ENCODE measurements at regions of chr15 and their contacts with region 1.

Region 1: DNA sequence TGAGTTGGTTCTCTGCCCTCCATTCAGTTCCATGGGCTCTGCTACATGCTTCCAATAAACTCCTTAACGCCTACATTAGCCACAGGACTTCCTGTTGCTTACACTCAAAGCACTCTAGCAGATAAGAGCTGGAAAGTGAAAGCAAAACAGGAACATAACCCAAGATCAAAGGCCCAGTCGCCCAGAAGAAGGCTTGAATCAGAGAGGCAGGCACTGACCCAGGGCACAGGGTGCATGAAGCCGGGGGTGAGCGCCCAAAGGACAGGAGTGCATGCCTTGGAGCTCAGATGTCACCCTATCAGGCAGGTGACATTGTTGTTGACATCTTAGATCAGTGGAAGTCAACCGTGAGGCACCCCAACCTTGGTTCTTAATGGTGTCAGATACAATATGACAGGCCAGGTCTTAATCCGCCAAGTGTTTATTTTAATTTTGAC is 235.1 kb downstream of the UACA start:
- DNase-seq: peak; percentile 77
- ATAC-seq: peak; percentile 61
- H3K4me3 ChIP-seq: peak overlapping the region in 2 of 5 experiments; percentile 10 to 51
- H3K4me3 Mint-ChIP-seq: peak overlapping the region; percentile 70
- H3K27ac ChIP-seq: peak overlapping the region; percentile 54 to 78
- H3K27ac Mint-ChIP-seq: peak overlapping the region; percentile 88
- H3K4me1 ChIP-seq: peaks cover 36 to 42% of the 10 kb centered on the region in 2 donors
- H3K4me1 Mint-ChIP-seq: peaks cover 49% of the 10 kb centered on the region
- H3K27me3 ChIP-seq: peaks cover 0 to under 1% (median 0%) of the 10 kb centered on the region in 4 experiments
- H3K27me3 Mint-ChIP-seq: peaks cover 7% of the 10 kb centered on the region
- CTCF ChIP-seq: no peak

Region 2: DNA sequence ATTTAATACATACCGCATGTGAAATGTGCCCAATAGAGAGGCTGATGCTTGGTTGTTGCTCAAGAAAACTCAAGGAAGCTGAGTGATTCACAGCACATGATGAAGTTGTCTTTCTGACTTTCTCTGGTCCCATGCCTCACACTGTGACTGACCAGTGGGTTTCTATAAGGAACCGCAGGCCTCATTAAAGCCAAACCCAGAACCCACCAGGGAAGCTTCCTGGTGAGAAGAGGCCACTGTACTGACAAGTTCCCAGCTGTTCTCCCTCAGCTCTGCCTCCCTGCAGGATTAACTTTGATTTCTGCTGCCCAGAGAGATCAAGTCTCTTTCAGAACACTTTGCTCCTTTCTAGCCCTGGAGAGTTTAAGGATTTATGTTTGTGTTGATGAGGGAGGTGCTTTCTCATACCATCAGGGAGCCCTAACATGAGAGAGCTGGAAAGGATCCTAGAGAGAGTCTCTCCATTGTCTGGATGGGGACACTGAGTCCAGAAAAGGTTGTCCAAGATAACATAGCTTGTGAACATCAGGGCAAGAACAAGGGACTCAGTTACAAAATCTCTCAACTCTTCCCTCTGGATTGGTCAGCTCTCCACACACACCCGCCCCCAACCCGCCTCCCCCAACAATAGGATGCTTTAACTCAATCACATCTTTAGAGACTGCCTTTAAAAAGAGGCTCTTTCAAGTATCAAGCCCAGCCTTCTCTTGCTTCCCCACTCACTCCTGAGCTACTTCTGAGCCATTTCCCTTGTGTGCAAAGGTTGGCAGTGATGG is 127.3 kb before region 1 on chr15:
- CTCF ChIA-PET with region 1: no interaction called
- POLR2A ChIA-PET with region 1: no interaction called
- intact Hi-C with region 1: no loop called
- DNase-seq: no peak
- ATAC-seq: no peak
- H3K4me3 ChIP-seq: no peak overlapping the region
- H3K4me3 Mint-ChIP-seq: no peak overlapping the region
- H3K27ac ChIP-seq: no peak overlapping the region
- H3K27ac Mint-ChIP-seq: no peak overlapping the region
- H3K4me1 ChIP-seq: peaks cover 13 to 15% of the 10 kb centered on the region in 2 donors
- H3K4me1 Mint-ChIP-seq: peaks cover 17% of the 10 kb centered on the region
- H3K27me3 ChIP-seq: no peaks in the 10 kb centered on the region
- H3K27me3 Mint-ChIP-seq: peaks cover 20% of the 10 kb centered on the region
- CTCF ChIP-seq: no peak

Region 3: DNA sequence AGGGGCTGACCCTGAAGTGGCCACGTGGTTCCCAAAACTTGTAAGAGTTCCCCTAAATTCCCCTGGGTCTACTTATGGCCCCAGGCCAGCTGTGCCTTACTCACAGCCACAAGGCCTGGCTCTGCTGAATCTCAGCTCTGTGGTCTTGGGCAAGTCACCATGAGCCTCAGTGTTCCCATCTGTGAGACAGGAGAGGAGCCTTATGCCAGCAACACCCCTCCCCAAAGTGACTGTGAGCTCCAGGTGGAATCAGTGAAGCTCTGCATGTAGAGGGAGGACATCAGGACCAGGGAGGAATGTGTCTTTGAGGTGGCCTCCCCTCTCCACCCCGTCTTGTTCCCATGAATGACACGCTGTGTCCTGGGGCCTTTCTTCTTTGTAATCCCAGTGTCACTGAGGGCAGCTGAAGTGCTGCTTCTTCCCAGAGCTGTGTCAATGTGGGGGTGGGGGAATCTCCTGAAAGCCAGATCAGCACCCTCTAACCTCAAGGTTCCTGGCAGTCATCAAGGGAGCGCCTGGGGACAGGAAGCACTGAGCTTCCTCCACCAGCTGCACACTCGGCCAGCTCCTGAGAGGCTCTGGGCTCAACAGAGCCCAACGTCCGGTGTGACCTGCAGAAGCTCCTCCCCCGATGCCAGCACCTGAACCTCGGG is 23.9 kb before region 1 on chr15:
- CTCF ChIA-PET with region 1: interaction called, 9 read pairs
- POLR2A ChIA-PET with region 1: interaction called, 6 read pairs
- intact Hi-C with region 1: loop called (anchors 1 kb)
- DNase-seq: peak; percentile 62
- ATAC-seq: peak; percentile 73
- H3K4me3 ChIP-seq: peak overlapping the region in 3 of 5 experiments; percentile 15 to 32 (median 22)
- H3K4me3 Mint-ChIP-seq: peak overlapping the region; percentile 72
- H3K27ac ChIP-seq: peak overlapping the region; percentile 26 to 64
- H3K27ac Mint-ChIP-seq: peak overlapping the region; percentile 86
- H3K4me1 ChIP-seq: peaks cover 50 to 68% of the 10 kb centered on the region in 2 donors
- H3K4me1 Mint-ChIP-seq: peaks cover 58% of the 10 kb centered on the region
- H3K27me3 ChIP-seq: no peaks in the 10 kb centered on the region
- H3K27me3 Mint-ChIP-seq: no peaks in the 10 kb centered on the region
- CTCF ChIP-seq: no peak

Measured in B cell (primary cell).